Heart right ventricle (tissue), 16 donors: ENCODE measurements at regions of chr20 and their contacts with region 1.

Region 1: GRCh38 chr20:57162133-57162652 is 104.2 kb downstream of the BMP7 start:
- DNase-seq: peak in 1 of 2 donors; percentile 55
- ATAC-seq: peak; percentile 36 to 63 (median 54)
- H3K4me3 ChIP-seq: peak overlapping the region in 7 of 10 donors; percentile 10 to 37 (median 28)
- H3K27ac ChIP-seq: peak overlapping the region in 9 of 10 donors; percentile 31 to 91 (median 68)
- H3K4me1 ChIP-seq: peaks cover 0 to 6% (median 0%) of the 10 kb centered on the region in 9 donors
- H3K27me3 ChIP-seq: peaks cover 0 to 5% (median 0%) of the 10 kb centered on the region in 7 donors
- CTCF ChIP-seq: no peak

Region 2: DNA sequence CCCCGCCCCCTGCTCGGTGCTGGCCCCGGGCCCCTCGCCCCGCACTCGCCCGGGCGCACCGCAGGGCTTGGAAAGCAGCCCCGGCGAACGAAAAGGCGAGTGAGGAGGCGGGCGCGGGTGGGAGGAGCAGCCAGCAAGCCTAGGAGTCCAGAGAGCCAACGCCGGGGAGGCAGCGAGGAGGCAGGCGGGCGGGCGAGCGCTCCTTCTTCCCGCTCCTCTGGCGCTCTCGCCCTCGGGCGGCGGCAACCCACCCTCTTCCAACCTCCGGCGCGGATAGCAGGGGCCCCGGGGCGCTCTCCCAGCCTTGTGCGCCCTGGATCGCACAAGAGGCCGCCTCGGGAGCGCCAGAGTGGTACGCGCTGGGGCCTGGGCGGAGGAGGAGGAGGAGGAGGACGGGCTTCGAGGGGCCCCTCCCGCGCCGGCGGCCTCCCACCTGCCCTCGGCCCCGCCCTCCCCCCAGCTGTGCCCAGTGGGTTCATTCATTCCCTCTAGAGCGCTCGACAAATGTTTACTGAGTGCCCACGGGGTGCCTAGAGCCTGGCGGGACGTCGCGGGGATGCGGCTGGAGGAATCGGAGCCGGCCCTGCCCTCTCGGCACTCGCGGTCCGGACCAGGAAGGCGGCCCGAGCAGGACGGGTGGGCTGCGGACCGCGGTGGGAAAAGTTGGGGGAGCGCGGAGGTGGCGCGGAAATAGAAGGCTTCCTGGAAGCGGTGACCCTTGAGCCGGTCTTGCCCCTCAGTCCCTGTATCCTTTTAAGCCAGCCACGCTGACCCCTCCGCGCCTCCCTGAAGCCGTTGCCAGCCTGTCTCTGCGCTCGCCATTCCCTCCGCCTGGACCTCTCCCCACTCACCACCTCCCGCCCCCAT is 104.3 kb after region 1 on chr20 and contains the start of gene BMP7:
- intact Hi-C with region 1: loop called in 2 of 10 experiments (anchors 5 kb)
- DNase-seq: peak in 1 of 2 donors; percentile 16
- ATAC-seq: peak in 2 of 8 donors; percentile 34 to 59
- H3K4me3 ChIP-seq: peak within 1 kb of the TSS; percentile 0 to 41 (median 32)
- H3K27ac ChIP-seq: peak within 1 kb of the TSS in 1 of 10 donors; percentile 23
- H3K4me1 ChIP-seq: peaks cover 0 to 13% (median 4%) of the 10 kb centered on the region in 9 donors
- H3K27me3 ChIP-seq: peaks cover 23 to 97% (median 77%) of the 10 kb centered on the region in 7 donors
- CTCF ChIP-seq: no peak
- total RNA-seq, gene BMP7: 1.3 to 19.2 (median 4.7) TPM